GM13976 (cell line): ENCODE measurements at regions of chr10 and their contacts with region 1.

Region 1: DNA sequence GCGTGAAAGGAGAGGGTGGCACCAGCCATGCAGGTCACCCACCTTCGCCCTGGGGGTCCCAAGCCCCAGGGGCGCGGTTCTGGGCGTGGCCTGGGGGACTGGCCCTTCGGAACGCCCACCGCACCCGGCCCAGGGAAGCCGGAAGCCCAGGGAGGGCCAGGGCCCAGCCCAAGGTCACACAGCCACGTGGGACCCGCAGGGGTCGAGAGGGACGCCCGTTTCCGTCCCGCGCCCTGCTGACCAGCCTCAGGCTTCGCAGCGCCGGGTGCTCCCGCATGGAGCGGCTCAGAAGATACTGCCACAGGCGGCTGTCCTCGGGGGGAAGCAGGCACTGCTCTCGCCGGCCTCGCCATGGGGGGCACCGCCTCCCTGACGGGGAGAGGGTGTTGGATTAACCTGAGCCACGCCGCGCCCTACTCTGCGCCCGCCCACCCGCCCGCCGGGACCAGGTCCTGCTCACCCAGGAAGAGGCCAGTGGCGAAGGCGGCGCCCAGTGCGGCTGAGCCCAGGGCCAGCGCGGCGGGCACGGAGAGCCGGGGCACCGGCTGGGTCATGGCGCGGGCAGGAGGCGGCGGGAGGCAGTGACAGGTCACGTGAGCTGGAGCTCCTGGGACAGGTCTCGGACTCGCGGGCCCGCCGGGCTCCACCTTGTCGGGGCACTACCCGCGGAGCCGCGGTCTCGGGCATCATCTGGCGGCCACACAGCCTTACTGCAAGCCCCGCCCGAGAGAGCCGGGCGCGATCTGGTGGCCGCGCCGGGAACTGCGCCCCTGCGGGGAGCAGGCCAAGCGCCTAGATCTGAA is at the start of gene COMTD1:
- DNase-seq: peak; percentile 97
- CTCF ChIP-seq: peak; percentile 100

Region 2: GRCh38 chr10:74255888-74256357 is 979.7 kb before region 1 on chr10:
- in situ Hi-C with region 1: loop called (anchors 25 kb)
- DNase-seq: no peak
- CTCF ChIP-seq: no peak

Region 3: GRCh38 chr10:74753442-74754211 is 481.9 kb before region 1 on chr10:
- in situ Hi-C with region 1: loop called (anchors 25 kb)
- DNase-seq: no peak
- CTCF ChIP-seq: no peak

Region 4: GRCh38 chr10:74967911-74968645 is 267.5 kb before region 1 on chr10:
- in situ Hi-C with region 1: no loop called
- DNase-seq: no peak
- CTCF ChIP-seq: no peak

Region 5: DNA sequence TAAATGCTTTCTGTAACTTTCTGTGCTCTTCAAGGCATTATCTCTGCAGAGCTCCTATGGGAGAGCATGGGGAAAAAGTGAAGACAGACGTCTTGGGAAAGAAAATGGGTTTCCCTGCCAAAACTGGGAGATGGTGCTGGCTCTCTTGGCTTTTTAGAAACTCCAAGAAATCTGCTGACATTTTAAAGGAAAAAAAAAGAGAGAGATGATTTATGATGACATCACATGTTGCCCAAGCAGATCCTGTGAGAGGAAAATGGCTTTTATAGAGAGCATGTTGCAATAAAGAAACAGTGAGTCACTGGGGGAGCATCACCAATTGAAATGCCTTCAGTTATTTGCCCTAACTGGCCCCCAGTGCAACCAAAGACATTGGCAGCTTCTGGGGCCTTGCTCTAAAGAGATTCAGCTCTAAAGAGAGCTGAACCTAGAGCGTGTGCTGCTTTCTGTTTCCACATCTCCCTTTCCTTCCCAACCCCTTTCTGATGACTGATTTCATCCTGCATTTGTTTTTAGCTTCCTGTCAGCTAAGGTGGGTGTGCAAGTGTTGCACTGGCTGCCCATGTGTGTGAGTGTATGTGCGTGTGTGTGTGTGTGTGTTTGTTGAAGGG is 233.5 kb after region 1 on chr10:
- in situ Hi-C with region 1: no loop called
- DNase-seq: no peak
- CTCF ChIP-seq: no peak

Region 6: DNA sequence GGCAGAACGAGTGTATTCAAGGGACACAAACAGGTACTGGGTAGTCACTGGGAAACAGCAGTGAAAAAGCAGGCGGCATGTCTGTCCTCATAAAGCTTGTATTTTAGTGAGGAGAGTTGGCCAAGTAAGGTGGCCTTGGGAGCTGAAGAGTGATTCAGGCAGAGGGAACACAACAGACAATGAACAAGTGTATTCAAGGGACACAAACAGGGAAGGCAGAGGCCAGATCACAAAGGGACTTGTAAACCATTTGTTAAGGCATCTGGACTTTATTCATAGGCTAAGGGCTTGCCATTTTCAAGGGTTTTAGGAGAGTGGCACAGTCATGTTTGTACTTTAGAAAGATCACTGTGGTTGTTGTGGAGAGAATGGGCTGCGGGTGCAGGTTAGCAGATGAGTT is 244.8 kb after region 1 on chr10:
- in situ Hi-C with region 1: no loop called
- DNase-seq: no peak
- CTCF ChIP-seq: no peak

Region 7: DNA sequence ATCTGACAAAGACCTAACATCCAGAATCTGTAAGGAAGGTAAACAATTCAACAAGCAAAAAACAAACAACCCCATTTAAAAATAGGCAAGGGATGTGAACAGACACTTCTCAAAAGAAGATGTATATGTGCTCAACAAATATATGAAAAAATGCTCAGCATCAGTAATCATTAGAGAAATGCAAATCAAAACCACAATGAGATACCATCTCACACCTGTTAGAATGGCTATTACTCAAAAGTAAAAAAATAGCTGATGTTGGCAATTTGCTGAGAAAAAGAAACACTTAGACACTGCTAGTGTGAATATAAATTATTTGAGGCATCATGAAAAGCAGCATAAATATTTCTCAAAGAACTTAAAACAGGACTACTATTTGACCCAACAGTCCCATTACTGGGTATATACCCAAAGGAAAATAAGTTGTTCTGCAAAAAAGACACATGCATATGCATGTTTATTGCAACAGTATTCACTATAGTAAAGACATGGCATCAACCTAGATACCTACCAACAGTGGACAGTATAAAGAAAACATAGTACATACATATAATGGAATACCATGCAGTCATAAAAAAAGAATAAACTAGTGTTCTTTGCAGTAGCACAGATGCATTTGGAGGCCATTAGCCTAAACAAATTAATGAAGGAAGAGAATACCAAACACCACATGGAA is 1421.9 kb after region 1 on chr10:
- in situ Hi-C with region 1: no loop called
- DNase-seq: no peak
- CTCF ChIP-seq: no peak